ENCODE measurements at regions of chr9 and their contacts with region 1.

Region 1: GRCh38 chr9:69877854-69878514 is 57.4 kb downstream of the CFAP95 start:
- DNase-seq: no peak
- ATAC-seq: peak; percentile 58
- H3K4me3 Mint-ChIP-seq: no peak overlapping the region
- H3K27ac Mint-ChIP-seq: no peak overlapping the region
- H3K4me1 Mint-ChIP-seq: no peaks in the 10 kb centered on the region
- H3K27me3 Mint-ChIP-seq: peaks cover 8% of the 10 kb centered on the region
- CTCF ChIP-seq: peak; percentile 78

Region 2: GRCh38 chr9:69421908-69422801 is 455.8 kb before region 1 on chr9:
- CTCF ChIA-PET with region 1: interaction called, 5 read pairs
- POLR2A ChIA-PET with region 1: no interaction called
- intact Hi-C with region 1: loop called (anchors 5 kb)
- DNase-seq: peak; percentile 52
- ATAC-seq: peak; percentile 49
- H3K4me3 Mint-ChIP-seq: no peak overlapping the region
- H3K27ac Mint-ChIP-seq: no peak overlapping the region
- H3K4me1 Mint-ChIP-seq: no peaks in the 10 kb centered on the region
- H3K27me3 Mint-ChIP-seq: peaks cover 3% of the 10 kb centered on the region
- CTCF ChIP-seq: peak; percentile 77

Region 3: DNA sequence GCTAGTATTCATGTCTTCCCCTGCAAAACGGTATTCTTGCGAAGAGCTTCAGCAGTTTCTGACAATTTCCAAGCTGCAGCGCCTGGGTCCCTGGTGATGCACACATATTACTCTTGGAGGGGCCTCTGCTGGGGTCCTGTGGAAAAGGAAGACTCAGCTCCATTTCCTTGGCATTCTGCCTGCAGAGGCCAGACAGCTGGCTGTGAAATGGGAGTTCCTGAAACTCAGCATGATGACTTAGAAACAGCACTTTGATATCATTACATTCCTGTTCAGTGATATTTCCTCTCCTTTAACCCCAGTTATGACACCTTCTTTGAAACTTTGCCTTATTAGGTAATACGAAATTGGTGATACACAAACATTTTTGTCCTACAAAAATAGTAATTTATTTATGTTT is 304.3 kb before region 1 on chr9:
- CTCF ChIA-PET with region 1: no interaction called
- POLR2A ChIA-PET with region 1: no interaction called
- intact Hi-C with region 1: no loop called
- DNase-seq: no peak
- ATAC-seq: no peak
- H3K4me3 Mint-ChIP-seq: no peak overlapping the region
- H3K27ac Mint-ChIP-seq: no peak overlapping the region
- H3K4me1 Mint-ChIP-seq: no peaks in the 10 kb centered on the region
- H3K27me3 Mint-ChIP-seq: peaks cover 9% of the 10 kb centered on the region
- CTCF ChIP-seq: no peak

Region 4: GRCh38 chr9:69672596-69673310 is 205.2 kb before region 1 on chr9:
- CTCF ChIA-PET with region 1: interaction called, 5 read pairs
- POLR2A ChIA-PET with region 1: no interaction called
- intact Hi-C with region 1: loop called (anchors 2 kb)
- DNase-seq: peak; percentile 76
- ATAC-seq: peak; percentile 95
- H3K4me3 Mint-ChIP-seq: peak overlapping the region; percentile 67
- H3K27ac Mint-ChIP-seq: no peak overlapping the region
- H3K4me1 Mint-ChIP-seq: peaks cover 9% of the 10 kb centered on the region
- H3K27me3 Mint-ChIP-seq: peaks cover 26% of the 10 kb centered on the region
- CTCF ChIP-seq: peak; percentile 92

Region 5: DNA sequence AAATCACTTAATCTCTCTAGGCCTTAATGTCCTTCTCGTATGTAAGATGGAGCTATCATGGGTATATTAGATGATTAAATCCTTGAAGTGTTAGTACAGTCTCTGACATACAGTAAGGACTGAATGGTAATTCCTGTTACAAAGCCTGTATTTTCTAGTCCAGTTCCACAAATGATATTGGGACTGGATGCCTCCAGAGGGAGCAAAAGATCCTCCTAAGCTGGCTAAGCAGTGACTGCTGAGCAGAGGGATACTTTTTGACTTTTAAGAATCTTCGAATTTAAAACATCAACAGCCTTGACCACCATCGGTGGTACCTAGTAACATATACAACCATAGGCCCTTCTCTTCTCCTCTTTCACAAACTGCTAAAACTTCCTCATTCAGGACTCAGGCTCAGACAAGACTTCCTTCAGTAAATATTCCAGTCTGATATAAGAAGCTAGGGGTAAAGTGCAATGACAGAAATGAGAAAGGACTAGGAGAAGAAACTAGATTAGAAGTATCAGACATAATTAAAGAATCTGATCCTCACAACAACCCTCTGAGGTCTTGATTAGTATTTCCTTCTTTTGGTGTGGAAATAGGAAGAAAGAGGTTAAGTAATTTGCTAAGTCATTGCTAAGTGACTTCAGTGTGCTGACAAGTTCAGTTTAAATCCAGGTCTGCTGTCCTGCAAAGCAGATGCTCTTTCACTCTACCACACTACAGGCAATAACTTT is 132.1 kb before region 1 on chr9:
- CTCF ChIA-PET with region 1: no interaction called
- POLR2A ChIA-PET with region 1: no interaction called
- intact Hi-C with region 1: loop called (anchors 10 kb)
- DNase-seq: no peak
- ATAC-seq: no peak
- H3K4me3 Mint-ChIP-seq: no peak overlapping the region
- H3K27ac Mint-ChIP-seq: no peak overlapping the region
- H3K4me1 Mint-ChIP-seq: peaks cover 36% of the 10 kb centered on the region
- H3K27me3 Mint-ChIP-seq: no peaks in the 10 kb centered on the region
- CTCF ChIP-seq: no peak

Region 6: DNA sequence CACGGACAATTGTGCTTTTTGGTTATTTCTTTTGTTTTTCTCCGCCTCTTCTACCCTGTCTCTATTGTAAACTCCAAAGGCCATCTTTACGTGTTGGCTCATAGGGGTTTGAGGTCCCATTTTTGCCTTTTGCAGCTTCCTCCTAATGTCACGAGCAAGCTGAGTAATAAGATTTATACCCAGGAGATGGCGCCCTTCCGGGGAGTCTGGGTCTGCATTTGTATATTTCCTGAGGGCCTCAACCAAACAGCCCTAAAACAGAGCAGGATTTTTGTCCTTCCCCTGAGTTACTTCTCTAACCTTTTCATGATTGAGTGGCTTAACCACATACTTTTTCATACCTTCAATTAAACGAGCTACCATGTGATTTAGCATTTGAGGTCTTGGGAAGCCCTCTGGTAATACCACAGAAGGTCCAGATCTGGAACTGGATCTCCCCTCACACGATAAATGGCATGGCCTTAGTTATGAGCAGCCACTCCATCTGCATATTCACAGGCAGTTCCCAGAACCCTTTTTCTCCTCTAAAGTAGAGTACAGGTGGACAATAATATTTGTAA is 68.6 kb before region 1 on chr9:
- CTCF ChIA-PET with region 1: interaction called, 6 read pairs
- POLR2A ChIA-PET with region 1: no interaction called
- intact Hi-C with region 1: loop called (anchors 1 kb)
- DNase-seq: peak; percentile 58
- ATAC-seq: peak; percentile 64
- H3K4me3 Mint-ChIP-seq: no peak overlapping the region
- H3K27ac Mint-ChIP-seq: no peak overlapping the region
- H3K4me1 Mint-ChIP-seq: no peaks in the 10 kb centered on the region
- H3K27me3 Mint-ChIP-seq: no peaks in the 10 kb centered on the region
- CTCF ChIP-seq: peak; percentile 54

Region 7: DNA sequence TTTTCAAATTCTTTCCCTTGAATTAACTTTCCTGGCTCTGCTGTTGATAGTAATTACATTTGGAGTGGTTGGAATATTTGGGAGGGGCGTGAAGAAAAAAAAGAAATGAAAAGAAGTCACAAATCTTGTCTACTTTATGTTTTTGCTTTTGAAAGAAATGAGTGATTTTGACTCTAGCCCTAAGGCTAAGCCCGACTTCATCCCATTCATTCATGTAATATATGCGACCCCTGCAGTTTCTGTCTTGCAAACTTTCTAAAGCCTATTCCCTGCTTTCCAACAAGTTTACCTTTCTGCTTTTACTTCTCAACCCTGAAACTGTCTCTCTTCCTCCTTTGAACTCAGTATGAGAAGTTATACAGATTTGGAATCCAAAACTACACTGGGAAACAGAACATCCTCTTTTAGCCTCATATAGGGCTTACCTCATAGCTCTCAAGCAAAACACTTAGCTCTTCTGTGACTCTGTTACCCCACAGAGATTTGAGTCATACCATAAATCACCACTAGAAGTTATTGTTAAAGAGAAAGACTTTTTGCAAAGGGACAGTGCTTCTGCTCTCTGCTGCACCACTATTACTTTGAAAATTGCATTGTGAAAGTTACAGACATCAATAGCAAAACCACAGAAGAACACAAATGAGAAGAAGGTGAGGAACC is 55.8 kb before region 1 on chr9:
- CTCF ChIA-PET with region 1: no interaction called
- POLR2A ChIA-PET with region 1: no interaction called
- intact Hi-C with region 1: no loop called
- DNase-seq: no peak
- ATAC-seq: peak; percentile 52
- H3K4me3 Mint-ChIP-seq: no peak overlapping the region
- H3K27ac Mint-ChIP-seq: no peak overlapping the region
- H3K4me1 Mint-ChIP-seq: peaks cover 32% of the 10 kb centered on the region
- H3K27me3 Mint-ChIP-seq: peaks cover 18% of the 10 kb centered on the region
- CTCF ChIP-seq: no peak

Region 8: DNA sequence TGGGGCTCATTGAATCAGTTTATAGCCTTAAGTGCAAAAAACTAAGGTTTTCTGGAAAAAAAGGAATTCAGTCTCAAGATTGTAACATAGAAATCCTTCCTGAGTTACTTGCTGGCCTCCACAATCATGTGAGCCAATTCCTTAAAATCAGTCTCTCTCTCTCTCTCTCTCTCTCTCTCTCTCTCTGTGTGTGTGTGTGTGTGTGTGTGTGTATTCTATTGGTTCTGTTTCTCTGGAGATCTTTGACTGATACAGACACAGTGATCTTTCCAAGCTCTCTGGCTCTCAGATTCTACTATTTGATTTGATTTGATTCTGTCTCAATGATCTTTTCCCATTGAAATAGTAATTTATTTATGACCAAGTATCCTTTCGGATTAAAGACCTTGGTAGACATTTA is 17.2 kb after region 1 on chr9:
- CTCF ChIA-PET with region 1: no interaction called
- POLR2A ChIA-PET with region 1: no interaction called
- intact Hi-C with region 1: no loop called
- DNase-seq: no peak
- ATAC-seq: no peak
- H3K4me3 Mint-ChIP-seq: no peak overlapping the region
- H3K27ac Mint-ChIP-seq: no peak overlapping the region
- H3K4me1 Mint-ChIP-seq: peaks cover 15% of the 10 kb centered on the region
- H3K27me3 Mint-ChIP-seq: peaks cover 2% of the 10 kb centered on the region
- CTCF ChIP-seq: no peak

Region 9: DNA sequence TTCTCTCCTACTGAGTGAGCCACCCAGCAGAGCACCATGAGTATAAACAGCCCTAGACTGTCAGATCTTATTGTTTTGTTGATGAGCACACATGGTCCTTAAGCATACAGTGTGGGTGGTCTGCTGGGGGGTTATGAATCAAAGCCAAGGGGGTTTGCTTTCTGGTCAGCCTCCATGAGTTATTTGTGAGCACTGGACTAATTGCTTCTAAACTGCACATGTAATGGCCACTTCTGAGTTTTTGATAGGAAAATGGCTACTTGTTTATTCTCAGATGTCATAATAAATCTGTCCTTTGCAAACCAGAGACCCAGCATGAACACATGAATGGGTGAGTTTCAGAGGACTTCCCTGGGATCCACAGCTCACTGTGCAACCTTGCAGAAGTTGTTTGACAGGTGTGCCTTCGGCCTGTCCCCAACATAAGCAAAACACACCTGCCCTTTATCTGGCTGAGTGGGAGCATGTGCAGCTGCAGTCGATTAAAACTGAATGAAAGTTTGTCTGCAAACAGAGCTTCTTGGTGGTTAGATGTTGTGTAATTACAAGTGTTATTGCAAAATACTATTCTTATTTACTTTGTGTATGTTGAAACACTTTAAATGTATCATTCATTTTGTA is 201.5 kb after region 1 on chr9:
- CTCF ChIA-PET with region 1: no interaction called
- POLR2A ChIA-PET with region 1: no interaction called
- intact Hi-C with region 1: no loop called
- DNase-seq: no peak
- ATAC-seq: no peak
- H3K4me3 Mint-ChIP-seq: no peak overlapping the region
- H3K27ac Mint-ChIP-seq: no peak overlapping the region
- H3K4me1 Mint-ChIP-seq: no peaks in the 10 kb centered on the region
- H3K27me3 Mint-ChIP-seq: peaks cover 10% of the 10 kb centered on the region
- CTCF ChIP-seq: no peak